WTC11 (cell line): ENCODE measurements at regions of chr9 and their contacts with region 1.

Region 1: DNA sequence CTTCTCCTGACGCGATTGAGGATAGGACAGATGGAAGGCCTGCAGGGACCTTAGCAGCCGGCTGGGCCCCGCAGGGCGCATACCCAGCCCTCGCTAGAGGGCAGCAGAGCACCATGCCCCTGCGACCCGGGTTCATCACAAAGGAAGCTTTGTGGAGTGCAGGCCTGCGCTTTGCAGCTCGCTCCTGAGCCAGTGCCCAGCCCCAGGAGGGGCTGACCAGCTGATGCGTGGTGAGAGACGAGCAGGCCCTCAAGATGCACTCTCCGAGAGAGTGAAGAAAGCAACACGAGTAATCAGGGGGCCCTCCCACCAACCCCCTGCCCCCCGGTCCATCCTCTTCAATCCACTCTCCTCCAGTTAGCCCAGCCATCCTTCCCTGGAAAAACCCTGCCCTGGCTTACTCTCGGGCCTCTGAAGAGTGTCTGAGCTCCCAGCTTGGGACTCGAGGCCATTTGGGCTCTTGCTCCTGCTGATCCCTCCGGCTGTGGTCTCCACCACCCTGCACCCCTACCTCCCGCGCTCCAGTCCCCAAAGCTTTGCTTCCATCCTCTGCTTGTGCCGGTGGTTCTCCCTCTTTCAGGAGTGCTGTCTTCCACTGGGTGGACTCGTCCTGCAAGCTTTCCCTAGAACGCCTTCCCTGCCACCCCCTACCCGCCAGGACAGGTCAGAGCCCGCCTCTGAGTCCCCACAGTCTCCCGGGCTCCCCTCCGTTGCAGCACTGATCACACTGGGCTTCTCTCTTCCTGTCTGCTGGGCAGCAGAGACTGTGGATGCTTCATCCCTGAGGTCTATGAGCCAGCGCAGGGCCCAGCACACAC is 9.1 kb upstream of the KIF12 start:
- DNase-seq: peak; percentile 90
- ATAC-seq: peak; percentile 96
- H3K4me3 Mint-ChIP-seq: no peak overlapping the region
- H3K27ac Mint-ChIP-seq: no peak overlapping the region
- H3K4me1 Mint-ChIP-seq: peaks cover 10% of the 10 kb centered on the region
- H3K27me3 Mint-ChIP-seq: peaks cover 83% of the 10 kb centered on the region
- CTCF ChIP-seq: peak; percentile 84

Region 2: DNA sequence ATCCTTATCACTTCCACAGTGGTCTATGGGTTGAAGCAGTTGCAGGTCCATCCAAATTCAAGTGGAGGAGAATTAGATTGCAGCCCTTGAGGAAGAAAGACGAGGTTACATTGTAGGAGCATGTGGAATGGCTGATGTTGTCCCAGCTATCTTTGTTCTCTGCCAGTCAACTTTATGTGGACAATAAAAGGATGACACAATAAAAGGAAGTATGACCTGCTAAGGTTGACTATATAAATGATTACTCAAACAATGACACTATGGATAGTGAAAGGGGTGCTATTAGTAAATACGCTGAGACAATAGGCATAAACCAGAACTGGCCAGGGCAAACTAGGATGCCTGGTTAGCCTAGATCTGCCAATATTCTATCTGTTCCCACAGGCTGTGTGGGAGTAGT is 244.9 kb before region 1 on chr9:
- CTCF ChIA-PET with region 1: no interaction called
- POLR2A ChIA-PET with region 1: no interaction called
- DNase-seq: no peak
- ATAC-seq: no peak
- H3K4me3 Mint-ChIP-seq: no peak overlapping the region
- H3K27ac Mint-ChIP-seq: no peak overlapping the region
- H3K4me1 Mint-ChIP-seq: peaks cover 5% of the 10 kb centered on the region
- H3K27me3 Mint-ChIP-seq: peaks cover 10% of the 10 kb centered on the region
- CTCF ChIP-seq: no peak

Region 3: DNA sequence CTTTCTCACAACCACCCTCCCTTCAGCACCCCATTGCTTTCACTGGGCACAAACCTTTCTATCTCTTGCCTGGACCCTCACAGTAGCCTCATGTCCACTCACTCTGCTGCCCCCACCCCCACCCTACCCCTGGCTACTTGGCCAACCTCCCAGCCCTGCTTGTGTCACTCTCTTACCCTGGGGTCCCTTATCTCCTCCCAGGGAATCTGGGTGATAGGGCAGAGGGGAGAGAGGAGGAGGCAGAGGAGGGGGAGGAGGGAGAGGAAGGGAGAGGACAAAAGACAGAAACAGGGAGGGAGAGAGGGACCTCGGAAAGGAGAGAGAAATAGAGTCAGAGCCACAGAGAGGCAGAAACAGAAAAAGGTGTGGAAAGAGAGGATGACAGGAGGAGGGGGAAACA is 15.9 kb after region 1 on chr9:
- CTCF ChIA-PET with region 1: interaction called, 30 read pairs
- POLR2A ChIA-PET with region 1: no interaction called
- DNase-seq: no peak
- ATAC-seq: no peak
- H3K4me3 Mint-ChIP-seq: no peak overlapping the region
- H3K27ac Mint-ChIP-seq: no peak overlapping the region
- H3K4me1 Mint-ChIP-seq: peaks cover 9% of the 10 kb centered on the region
- H3K27me3 Mint-ChIP-seq: peaks cover 37% of the 10 kb centered on the region
- CTCF ChIP-seq: no peak

Region 4: DNA sequence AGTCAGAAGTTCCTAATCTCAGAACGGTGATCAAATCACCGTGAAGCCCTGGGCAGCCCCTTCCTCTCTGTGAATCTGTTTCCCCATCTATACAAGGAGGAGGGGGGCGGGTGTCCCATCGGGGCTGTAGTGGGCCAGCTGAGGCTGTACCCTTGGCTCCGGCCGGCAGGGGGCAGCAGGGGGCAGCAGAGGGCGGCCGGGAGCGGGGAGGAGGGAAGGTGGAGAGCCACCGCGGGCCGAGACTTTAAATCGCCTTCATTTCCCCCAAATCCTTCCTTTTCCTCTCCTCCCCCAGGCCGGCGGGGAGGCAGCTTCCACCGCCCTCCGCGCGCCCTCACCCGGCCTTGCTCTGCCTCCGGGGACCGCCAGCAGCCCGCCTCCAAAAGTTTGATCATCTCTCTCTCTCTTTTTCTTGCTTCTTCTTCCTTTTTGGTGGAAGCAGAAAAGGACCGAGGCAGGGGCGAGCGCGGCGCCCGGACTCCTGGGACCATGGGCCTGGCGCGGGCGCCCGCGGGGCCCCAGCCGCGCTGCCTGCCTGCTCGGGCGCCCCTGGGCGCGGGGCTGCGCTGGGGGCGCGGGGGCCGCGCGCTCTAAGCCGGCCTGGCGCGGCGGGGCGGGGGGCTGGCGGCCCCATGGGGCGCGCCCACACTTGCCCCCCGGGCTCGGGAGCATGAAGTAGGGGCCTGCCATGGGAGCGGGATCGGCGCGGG is 47.2 kb after region 1 on chr9 and contains the start of gene COL27A1:
- CTCF ChIA-PET with region 1: interaction called, 140 read pairs
- POLR2A ChIA-PET with region 1: interaction called, 4 read pairs
- DNase-seq: peak; percentile 96
- ATAC-seq: peak; percentile 77
- H3K4me3 Mint-ChIP-seq: peak within 1 kb of the TSS; percentile 89
- H3K27ac Mint-ChIP-seq: 0 out of 2 replicates have a peak within 1 kb of the TSS, but pooled peaks have one; percentile 8
- H3K4me1 Mint-ChIP-seq: peaks cover 35% of the 10 kb centered on the region
- H3K27me3 Mint-ChIP-seq: peaks cover 57% of the 10 kb centered on the region
- CTCF ChIP-seq: peak; percentile 89
- total RNA-seq, gene COL27A1: 34.5 to 47.5 TPM (median 36.9 TPM) in 3 replicates

Region 5: GRCh38 chr9:114207034-114207810 is 99.0 kb after region 1 on chr9:
- CTCF ChIA-PET with region 1: interaction called, 16 read pairs
- POLR2A ChIA-PET with region 1: no interaction called
- DNase-seq: no peak
- ATAC-seq: no peak; the same call in 1 of the 2 replicates
- H3K4me3 Mint-ChIP-seq: no peak overlapping the region
- H3K27ac Mint-ChIP-seq: no peak overlapping the region
- H3K4me1 Mint-ChIP-seq: peaks cover 9% of the 10 kb centered on the region
- H3K27me3 Mint-ChIP-seq: no peaks in the 10 kb centered on the region
- CTCF ChIP-seq: no peak

Region 6: GRCh38 chr9:114238891-114239875 is 131.0 kb after region 1 on chr9:
- CTCF ChIA-PET with region 1: interaction called, 23 read pairs
- POLR2A ChIA-PET with region 1: no interaction called
- DNase-seq: peak; percentile 24
- ATAC-seq: peak; percentile 80
- H3K4me3 Mint-ChIP-seq: no peak overlapping the region
- H3K27ac Mint-ChIP-seq: no peak overlapping the region
- H3K4me1 Mint-ChIP-seq: no peaks in the 10 kb centered on the region
- H3K27me3 Mint-ChIP-seq: no peaks in the 10 kb centered on the region
- CTCF ChIP-seq: no peak

Region 7: DNA sequence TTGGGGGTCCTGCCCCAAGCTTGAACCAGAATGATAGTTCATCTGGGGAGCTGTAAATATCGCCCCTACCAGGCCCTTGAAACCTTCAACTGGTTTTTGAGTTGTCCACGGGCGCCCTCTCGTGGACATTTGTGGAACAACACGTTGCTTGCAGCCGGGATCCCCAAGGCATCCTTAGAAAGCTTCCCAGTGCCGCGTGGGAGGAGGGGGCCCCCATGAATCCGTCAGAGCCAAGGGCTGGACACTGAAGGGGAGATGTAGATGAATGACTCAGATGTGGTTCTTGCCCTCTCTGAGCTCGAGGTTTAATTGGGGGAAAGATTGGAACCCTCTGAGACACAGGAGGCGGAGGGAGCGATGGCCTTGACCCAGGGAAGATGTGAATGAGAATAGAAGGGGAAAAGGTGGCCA is 182.8 kb after region 1 on chr9:
- CTCF ChIA-PET with region 1: interaction called, 232 read pairs
- POLR2A ChIA-PET with region 1: no interaction called
- DNase-seq: peak; percentile 88
- ATAC-seq: peak; percentile 65
- H3K4me3 Mint-ChIP-seq: no peak overlapping the region
- H3K27ac Mint-ChIP-seq: no peak overlapping the region
- H3K4me1 Mint-ChIP-seq: peaks cover 7% of the 10 kb centered on the region
- H3K27me3 Mint-ChIP-seq: no peaks in the 10 kb centered on the region
- CTCF ChIP-seq: peak; percentile 95